Calu3 (cell line): ENCODE measurements at regions of chr5 and their contacts with region 1.

Region 1: GRCh38 chr5:31581498-31582099 is 49.5 kb downstream of the C5orf22 start:
- DNase-seq: peak; percentile 24
- H3K4me3 Mint-ChIP-seq: no peak overlapping the region
- H3K27ac Mint-ChIP-seq: no peak overlapping the region
- H3K4me1 Mint-ChIP-seq: no peaks in the 10 kb centered on the region
- H3K27me3 Mint-ChIP-seq: peaks cover 41% of the 10 kb centered on the region
- CTCF ChIP-seq: peak; percentile 19

Region 2: GRCh38 chr5:32076699-32077695 is 495.4 kb after region 1 on chr5:
- CTCF ChIA-PET with region 1: no interaction called
- intact Hi-C with region 1: loop called (anchors 5 kb)
- DNase-seq: peak; percentile 42
- H3K4me3 Mint-ChIP-seq: no peak overlapping the region
- H3K27ac Mint-ChIP-seq: no peak overlapping the region
- H3K4me1 Mint-ChIP-seq: no peaks in the 10 kb centered on the region
- H3K27me3 Mint-ChIP-seq: no peaks in the 10 kb centered on the region
- CTCF ChIP-seq: peak; percentile 52

Region 3: GRCh38 chr5:32092938-32093812 is 511.6 kb after region 1 on chr5:
- CTCF ChIA-PET with region 1: no interaction called
- intact Hi-C with region 1: loop called (anchors 5 kb)
- DNase-seq: peak; percentile 60
- H3K4me3 Mint-ChIP-seq: no peak overlapping the region
- H3K27ac Mint-ChIP-seq: no peak overlapping the region
- H3K4me1 Mint-ChIP-seq: no peaks in the 10 kb centered on the region
- H3K27me3 Mint-ChIP-seq: no peaks in the 10 kb centered on the region
- CTCF ChIP-seq: peak; percentile 74